ENCODE measurements at regions of chr13 and their contacts with region 1.

Region 1: GRCh38 chr13:65054277-65054676 is 2175.9 kb downstream of the PCDH9 start:
- DNase-seq: no peak
- H3K4me3 ChIP-seq: no peak overlapping the region
- H3K27ac ChIP-seq: no peak overlapping the region
- H3K4me1 ChIP-seq: no peaks in the 10 kb centered on the region
- H3K27me3 ChIP-seq: no peaks in the 10 kb centered on the region
- CTCF ChIP-seq: no peak
- POLR2A ChIP-seq: no peak

Region 2: DNA sequence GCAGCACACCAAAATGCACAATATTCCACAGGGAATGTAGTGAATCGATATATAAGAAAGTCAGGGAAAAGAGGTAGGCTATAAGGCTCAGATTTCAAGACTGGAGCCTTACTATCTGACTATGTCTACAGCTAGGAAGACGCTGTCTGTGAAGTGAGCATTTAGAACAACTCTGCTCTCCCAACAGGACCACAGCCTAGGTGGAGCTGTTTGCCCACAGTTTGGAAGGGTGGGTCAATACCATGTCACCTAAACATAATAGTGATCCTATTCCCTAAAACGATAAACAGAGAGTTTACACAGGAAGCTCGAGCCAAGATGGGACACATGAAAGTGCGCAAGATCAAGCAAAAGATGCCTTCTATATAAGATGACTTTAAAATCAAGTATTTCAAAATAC is 1152.6 kb before region 1 on chr13:
- CTCF ChIA-PET with region 1: no interaction called
- POLR2A ChIA-PET with region 1: no interaction called
- dilution Hi-C with region 1: no loop called
- intact Hi-C with region 1: no loop called
- DNase-seq: no peak
- H3K4me3 ChIP-seq: no peak overlapping the region
- H3K27ac ChIP-seq: no peak overlapping the region
- H3K4me1 ChIP-seq: no peaks in the 10 kb centered on the region
- H3K27me3 ChIP-seq: no peaks in the 10 kb centered on the region
- CTCF ChIP-seq: no peak
- POLR2A ChIP-seq: no peak

Region 3: DNA sequence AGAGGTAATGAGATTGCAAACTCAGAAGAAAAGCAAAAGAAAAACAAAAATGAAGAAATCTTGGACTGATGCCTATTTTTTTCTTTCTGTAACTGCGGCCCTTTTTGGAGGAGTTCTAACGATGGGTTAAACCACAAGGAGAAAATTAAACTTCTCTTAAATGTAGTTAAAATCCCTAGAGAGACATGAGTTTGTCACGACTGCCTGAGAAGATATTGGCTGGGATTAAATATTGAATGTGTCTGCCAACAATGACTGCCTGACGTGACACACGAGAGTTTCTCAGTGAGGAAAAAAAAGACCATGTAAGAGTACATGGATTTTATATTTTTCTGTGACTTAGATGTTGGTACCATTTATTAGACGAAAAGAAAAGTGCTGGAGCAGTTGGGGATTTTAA is 1162.5 kb after region 1 on chr13:
- CTCF ChIA-PET with region 1: no interaction called
- POLR2A ChIA-PET with region 1: no interaction called
- dilution Hi-C with region 1: no loop called
- intact Hi-C with region 1: loop called (anchors 5 kb)
- DNase-seq: no peak
- H3K4me3 ChIP-seq: no peak overlapping the region
- H3K27ac ChIP-seq: no peak overlapping the region
- H3K4me1 ChIP-seq: no peaks in the 10 kb centered on the region
- H3K27me3 ChIP-seq: no peaks in the 10 kb centered on the region
- CTCF ChIP-seq: no peak
- POLR2A ChIP-seq: no peak

Measured in endothelial cell of umbilical vein (primary cell).